A549 (cell line): ENCODE measurements at regions of chr15 and their contacts with region 1.

Region 1: GRCh38 chr15:74438721-74439316 is 5.1 kb upstream of the SEMA7A start:
- DNase-seq: peak; percentile 64 to 67
- ATAC-seq: peak; percentile 79 to 90
- H3K4me3 ChIP-seq: no peak overlapping the region
- H3K27ac ChIP-seq: no peak overlapping the region
- H3K4me1 ChIP-seq: 0 out of 3 replicates have a peak, but pooled peaks cover 3% of the 10 kb centered on the region
- CTCF ChIP-seq: peak; percentile 90
- EP300 ChIP-seq: no peak
- POLR2A ChIP-seq: no peak
- RAD21 ChIP-seq: peak; percentile 83 to 94

Region 2: GRCh38 chr15:74407055-74407691 is 31.6 kb before region 1 on chr15:
- CTCF ChIA-PET with region 1: interaction called, 16 read pairs
- POLR2A ChIA-PET with region 1: no interaction called
- DNase-seq: peak; percentile 21 to 31
- ATAC-seq: peak; percentile 57 to 76
- H3K4me3 ChIP-seq: no peak overlapping the region
- H3K27ac ChIP-seq: peak overlapping the region in 1 of 2 experiments; percentile 55; a peak in 2 of 6 replicates
- H3K4me1 ChIP-seq: peaks cover 8% of the 10 kb centered on the region; the same call in 1 of the 3 replicates
- CTCF ChIP-seq: no peak
- EP300 ChIP-seq: no peak
- POLR2A ChIP-seq: no peak
- RAD21 ChIP-seq: no peak

Region 3: GRCh38 chr15:74422650-74423430 is 16.0 kb before region 1 on chr15:
- CTCF ChIA-PET with region 1: interaction called, 20 read pairs
- POLR2A ChIA-PET with region 1: no interaction called
- DNase-seq: peak in 1 of 2 experiments; percentile 27
- ATAC-seq: peak in 1 of 2 experiments; percentile 70; a peak in 4 of 6 replicates
- H3K4me3 ChIP-seq: no peak overlapping the region
- H3K27ac ChIP-seq: peak overlapping the region; percentile 19 to 71; a peak in 3 of 6 replicates
- H3K4me1 ChIP-seq: peaks cover 25% of the 10 kb centered on the region
- CTCF ChIP-seq: no peak
- EP300 ChIP-seq: no peak
- POLR2A ChIP-seq: no peak
- RAD21 ChIP-seq: no peak

Region 4: GRCh38 chr15:74451861-74452710 is 13.3 kb after region 1 on chr15:
- CTCF ChIA-PET with region 1: interaction called, 54 read pairs
- POLR2A ChIA-PET with region 1: no interaction called
- DNase-seq: no peak
- ATAC-seq: no peak
- H3K4me3 ChIP-seq: no peak overlapping the region
- H3K27ac ChIP-seq: no peak overlapping the region
- H3K4me1 ChIP-seq: no peaks in the 10 kb centered on the region
- CTCF ChIP-seq: no peak
- EP300 ChIP-seq: no peak
- POLR2A ChIP-seq: no peak
- RAD21 ChIP-seq: no peak